Calu3 (cell line): ENCODE measurements at regions of chr14 and their contacts with region 1.

Region 1: DNA sequence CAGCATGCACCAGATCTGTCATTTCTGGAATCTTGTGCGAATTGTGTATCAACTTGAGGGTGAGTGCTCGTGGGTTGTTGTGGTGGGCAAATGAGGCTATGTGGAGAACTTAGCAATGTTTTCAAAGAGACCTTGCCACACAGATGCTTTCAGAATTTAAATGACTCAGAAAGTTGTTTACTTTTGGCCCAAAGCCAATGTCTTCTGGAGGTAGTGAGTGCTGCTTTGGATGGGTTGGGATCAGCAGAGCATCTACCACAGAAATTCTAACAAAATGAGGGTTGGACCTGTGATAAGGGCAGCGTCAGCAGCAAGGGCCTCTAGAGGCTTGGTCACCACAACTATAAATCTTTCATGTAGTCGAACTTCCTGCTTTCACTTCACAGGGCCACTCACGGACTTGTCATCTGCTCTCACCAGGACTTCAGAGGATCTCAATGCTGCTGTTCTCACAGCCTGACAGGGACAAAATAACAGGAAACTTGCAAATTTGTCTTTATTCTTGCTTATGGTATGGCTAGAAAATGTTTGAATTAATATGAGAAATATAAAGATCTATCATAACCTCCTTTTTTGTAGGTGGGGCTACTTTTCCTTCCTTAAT is 111.4 kb downstream of the DACT1 start:
- DNase-seq: peak; percentile 25
- H3K4me3 Mint-ChIP-seq: no peak overlapping the region
- H3K27ac Mint-ChIP-seq: no peak overlapping the region
- H3K4me1 Mint-ChIP-seq: peaks cover 54% of the 10 kb centered on the region
- H3K27me3 Mint-ChIP-seq: peaks cover 14% of the 10 kb centered on the region
- CTCF ChIP-seq: no peak

Region 2: DNA sequence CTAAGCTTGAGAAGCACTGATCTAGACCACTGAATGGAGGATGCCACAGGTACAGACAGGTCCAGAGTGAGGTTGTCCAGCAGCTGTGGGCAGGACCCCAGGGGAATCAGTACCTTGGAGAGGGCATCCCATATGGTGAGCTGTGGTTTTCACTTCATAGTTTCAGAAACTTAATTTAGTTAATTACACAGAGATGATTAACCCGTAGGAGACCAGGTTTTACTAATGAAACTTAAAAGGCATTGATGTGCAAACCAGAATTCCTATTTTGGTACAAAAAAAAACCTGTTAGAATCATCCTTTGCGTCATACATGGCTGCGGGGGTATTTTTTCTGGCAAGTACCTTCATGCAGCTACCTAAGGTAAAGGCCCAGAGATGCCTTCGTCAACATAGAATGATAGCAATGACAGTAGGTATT is 47.9 kb after region 1 on chr14:
- CTCF ChIA-PET with region 1: no interaction called
- intact Hi-C with region 1: loop called (anchors 5 kb)
- DNase-seq: peak; percentile 21
- H3K4me3 Mint-ChIP-seq: peak overlapping the region; percentile 12
- H3K27ac Mint-ChIP-seq: no peak overlapping the region
- H3K4me1 Mint-ChIP-seq: peaks cover 27% of the 10 kb centered on the region
- H3K27me3 Mint-ChIP-seq: no peaks in the 10 kb centered on the region
- CTCF ChIP-seq: no peak

Region 3: GRCh38 chr14:59028476-59029202 is 279.5 kb after region 1 on chr14:
- CTCF ChIA-PET with region 1: no interaction called
- intact Hi-C with region 1: loop called (anchors 10 kb)
- DNase-seq: peak; percentile 68
- H3K4me3 Mint-ChIP-seq: no peak overlapping the region
- H3K27ac Mint-ChIP-seq: no peak overlapping the region
- H3K4me1 Mint-ChIP-seq: peaks cover 8% of the 10 kb centered on the region
- H3K27me3 Mint-ChIP-seq: no peaks in the 10 kb centered on the region
- CTCF ChIP-seq: peak; percentile 59